Posterior cingulate gyrus (tissue), 11 donors: ENCODE measurements at regions of chr10 and their contacts with region 1.

Region 1: DNA sequence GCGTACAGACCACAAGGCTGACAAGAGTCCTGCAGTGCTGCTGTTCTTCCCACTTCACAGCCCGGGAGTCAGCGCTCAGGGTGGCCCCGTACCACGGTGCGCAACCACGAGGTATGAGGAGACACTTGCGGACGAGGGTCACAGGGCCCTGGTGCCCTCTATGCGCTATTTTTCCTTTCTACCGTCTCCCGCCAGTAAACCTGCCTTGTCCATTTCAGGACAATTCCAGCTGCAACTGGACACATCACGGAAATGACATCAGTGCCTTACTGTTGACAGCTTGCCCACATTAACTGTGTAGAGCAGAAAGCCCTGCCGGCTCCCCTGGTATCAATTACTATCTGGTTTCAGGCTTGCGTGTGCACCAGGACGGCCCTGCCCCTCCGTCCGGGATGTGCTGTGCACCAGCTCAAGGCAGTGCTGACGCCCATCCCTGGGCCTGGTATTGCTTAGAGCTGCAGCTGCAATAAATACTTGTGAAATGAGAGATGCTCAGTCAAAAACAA is 65.1 kb downstream of the ZRANB1 start:
- DNase-seq: peak in 3 of 10 donors; percentile 49 to 88 (median 66)

Region 2: GRCh38 chr10:125043841-125044658 is 37.1 kb after region 1 on chr10:
- intact Hi-C with region 1: loop called (anchors 5 kb)
- DNase-seq: peak in 2 of 10 donors; percentile 33 to 49